ENCODE measurements at regions of chr7 and their contacts with region 1.

Region 1: DNA sequence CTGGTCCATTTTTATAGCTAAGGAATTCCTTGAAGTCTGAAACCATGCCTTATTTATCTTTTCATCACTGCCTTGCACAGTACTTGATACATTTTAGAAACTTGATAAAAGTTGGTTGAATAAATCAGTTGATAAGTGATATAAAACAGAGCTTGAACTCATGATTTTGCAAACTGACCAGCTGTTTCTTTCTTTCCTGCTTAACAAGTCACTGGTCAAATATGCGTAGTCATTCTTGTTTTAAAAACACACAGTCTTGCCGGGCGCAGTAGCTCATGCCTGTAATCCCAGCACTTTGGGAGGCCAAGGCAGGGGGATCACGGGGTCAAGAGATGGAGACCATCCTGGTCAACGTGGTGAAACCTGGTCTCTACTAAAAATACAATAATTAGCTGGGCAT is 6.3 kb downstream of the TPST1 start:
- DNase-seq: no peak
- H3K4me3 ChIP-seq: no peak overlapping the region
- H3K27ac ChIP-seq: peak overlapping the region in 4 of 5 donors; percentile 57 to 87 (median 62)
- H3K4me1 ChIP-seq: peaks cover 12 to 37% (median 36%) of the 10 kb centered on the region in 4 donors
- H3K27me3 ChIP-seq: no peaks in the 10 kb centered on the region
- CTCF ChIP-seq: no peak
- EP300 ChIP-seq: no peak
- POLR2A ChIP-seq: no peak

Region 2: DNA sequence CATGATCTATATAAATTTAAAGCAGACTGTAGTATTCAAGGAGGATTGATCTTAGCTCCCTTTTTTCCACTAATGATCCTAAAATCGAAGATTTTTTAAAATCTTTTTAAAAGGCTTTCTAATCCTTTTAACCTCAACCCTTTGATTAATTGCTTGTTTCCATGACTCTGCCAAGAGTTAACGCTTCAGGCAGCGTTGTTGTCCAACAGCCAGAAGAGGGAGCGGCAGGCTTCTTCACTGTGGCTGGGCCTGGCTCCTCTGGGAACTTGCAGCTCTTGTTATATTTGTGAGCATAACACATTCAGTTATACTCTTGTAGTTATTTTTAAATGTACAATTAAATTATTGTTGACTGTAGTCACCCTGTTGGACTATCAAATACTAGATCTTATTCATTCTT is 70.5 kb before region 1 on chr7:
- intact Hi-C with region 1: loop called (anchors 10 kb)
- DNase-seq: peak; percentile 62 to 92
- H3K4me3 ChIP-seq: no peak overlapping the region
- H3K27ac ChIP-seq: peak overlapping the region in 4 of 5 donors; percentile 52 to 83 (median 66)
- H3K4me1 ChIP-seq: peaks cover 0 to 64% (median 48%) of the 10 kb centered on the region in 4 donors
- H3K27me3 ChIP-seq: no peaks in the 10 kb centered on the region
- CTCF ChIP-seq: peak in 5 of 7 experiments; percentile 30 to 49 (median 39)
- EP300 ChIP-seq: no peak
- POLR2A ChIP-seq: no peak

Region 3: GRCh38 chr7:66277492-66277891 is 66.1 kb after region 1 on chr7:
- intact Hi-C with region 1: loop called (anchors 10 kb)
- DNase-seq: no peak
- H3K4me3 ChIP-seq: no peak overlapping the region
- H3K27ac ChIP-seq: no peak overlapping the region
- H3K4me1 ChIP-seq: peaks cover 0 to 12% (median 6%) of the 10 kb centered on the region in 4 donors
- H3K27me3 ChIP-seq: no peaks in the 10 kb centered on the region
- CTCF ChIP-seq: no peak
- EP300 ChIP-seq: no peak
- POLR2A ChIP-seq: no peak